Motor neuron (in vitro differentiated cells): ENCODE measurements at regions of chr17 and their contacts with region 1.

Region 1: GRCh38 chr17:20121359-20122253 is 112.4 kb downstream of the SPECC1 start:
- ATAC-seq: peak; percentile 55 to 84 (median 66)
- H3K4me3 ChIP-seq: no peak overlapping the region
- H3K27ac ChIP-seq: no peak overlapping the region
- H3K4me1 ChIP-seq: no peaks in the 10 kb centered on the region

Region 2: DNA sequence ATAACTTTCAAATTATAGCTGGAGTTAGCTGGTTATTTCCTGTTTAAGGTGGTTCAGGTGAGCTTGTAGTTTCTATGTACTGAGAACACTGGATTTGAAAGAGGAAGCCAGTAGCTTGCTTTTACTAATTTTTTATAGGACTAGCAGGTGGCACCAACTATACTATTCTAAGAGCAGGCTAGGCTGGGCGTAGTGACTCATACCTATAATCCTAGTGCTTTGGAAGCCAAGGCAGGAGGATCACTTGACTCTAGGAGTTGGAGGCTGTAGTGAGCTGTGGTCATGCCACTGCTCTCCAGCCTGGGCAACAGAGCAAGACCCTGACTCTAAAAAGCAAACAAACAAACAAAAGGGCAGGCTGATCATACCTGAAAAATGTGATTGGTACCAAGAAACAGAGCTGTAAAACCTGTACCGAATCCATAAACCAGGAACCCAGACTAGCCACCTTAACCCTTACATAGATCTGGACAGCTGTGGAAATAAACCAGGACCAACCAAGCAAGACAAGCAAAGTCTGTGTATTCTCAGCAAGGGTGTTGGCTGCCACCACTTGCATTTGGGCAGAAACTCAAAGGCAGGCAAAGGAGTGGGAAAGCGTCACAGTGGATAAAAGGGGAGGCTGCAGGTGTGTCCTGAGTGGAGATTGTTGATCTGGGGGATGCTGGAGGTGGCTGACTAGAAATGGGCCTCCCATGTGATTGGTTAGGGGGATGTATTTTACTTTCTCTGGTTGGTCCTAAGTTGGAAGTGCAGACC is 551.6 kb before region 1 on chr17:
- in situ Hi-C with region 1: no loop called
- ATAC-seq: no peak
- H3K4me3 ChIP-seq: no peak overlapping the region
- H3K27ac ChIP-seq: no peak overlapping the region
- H3K4me1 ChIP-seq: no peaks in the 10 kb centered on the region

Region 3: DNA sequence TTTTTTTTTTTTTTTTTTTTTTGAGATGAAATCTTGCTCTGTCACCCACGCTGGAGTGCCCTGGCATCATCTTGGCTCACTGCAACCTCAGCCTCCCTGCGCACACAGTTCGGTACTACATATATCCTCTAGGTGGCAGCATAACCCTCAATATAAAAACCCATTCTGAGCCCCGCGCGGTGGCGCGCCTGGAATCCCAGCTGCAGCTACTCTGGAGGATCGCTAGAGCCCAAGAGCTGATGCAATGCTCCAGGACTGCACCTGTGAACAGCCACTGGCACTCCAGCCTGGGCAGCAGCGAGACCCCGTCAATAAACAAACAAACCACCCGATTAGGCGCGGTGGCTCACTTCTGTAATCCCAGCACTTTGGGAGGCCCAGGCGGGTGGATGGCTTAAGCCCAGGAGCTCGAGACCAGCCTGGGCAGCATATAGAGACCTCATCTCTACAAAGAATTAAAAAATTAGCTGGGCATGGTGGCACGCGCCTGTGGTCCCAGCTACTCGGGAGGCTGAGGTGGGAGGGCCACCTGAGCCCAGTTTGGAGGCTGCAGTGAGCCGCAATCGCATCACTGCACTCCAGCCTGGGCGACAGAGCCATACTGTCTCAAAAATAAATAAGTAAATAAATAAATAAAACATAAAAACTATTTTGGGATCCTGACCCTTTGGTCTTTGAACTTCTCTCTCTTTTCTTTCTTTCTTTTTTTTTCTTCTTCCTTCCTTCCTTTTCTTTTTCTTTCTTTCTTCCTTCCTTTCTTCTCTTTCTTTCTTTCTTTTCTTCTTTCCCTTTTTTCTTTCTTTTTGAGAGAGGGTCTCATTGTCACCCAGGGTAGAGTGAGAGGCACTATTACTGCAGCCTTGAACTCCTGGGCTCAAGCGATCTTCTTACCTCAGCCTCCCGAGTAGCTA is 128.5 kb before region 1 on chr17:
- in situ Hi-C with region 1: loop called in 5 of 9 experiments (anchors 10 to 25 kb)
- ATAC-seq: peak; percentile 91 to 99 (median 98)
- H3K4me3 ChIP-seq: no peak overlapping the region
- H3K27ac ChIP-seq: peak overlapping the region; percentile 43 to 54
- H3K4me1 ChIP-seq: peaks cover 0 to 2% of the 10 kb centered on the region in 2 donors

Region 4: DNA sequence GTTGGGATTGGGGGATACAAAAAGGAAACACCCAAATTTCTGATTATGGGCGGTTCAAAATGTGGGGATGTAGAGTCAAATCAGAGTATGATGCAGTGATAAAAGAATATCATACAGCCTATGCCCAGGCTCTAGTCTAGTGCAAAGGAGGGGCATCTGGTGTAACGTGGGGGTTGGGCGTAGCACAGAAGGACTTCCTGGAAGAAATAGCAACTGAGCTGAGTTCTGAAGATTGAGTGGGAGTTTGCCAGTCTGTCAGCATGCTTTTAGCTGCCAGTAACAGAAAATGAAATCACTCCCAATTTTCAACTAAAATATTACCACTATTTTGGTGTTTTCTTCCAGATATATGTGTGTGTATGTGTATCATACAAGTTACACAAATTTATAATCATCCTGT is 84.5 kb after region 1 on chr17:
- in situ Hi-C with region 1: loop called in 1 of 9 experiments (anchors 25 kb)
- ATAC-seq: peak in 3 of 8 experiments; percentile 44 to 77 (median 46)
- H3K4me3 ChIP-seq: no peak overlapping the region
- H3K27ac ChIP-seq: no peak overlapping the region
- H3K4me1 ChIP-seq: no peaks in the 10 kb centered on the region